Endothelial cell of umbilical vein (primary cell): ENCODE measurements at regions of chr16 and their contacts with region 1.

Region 1: GRCh38 chr16:88824256-88825082 is 12.7 kb upstream of the APRT start:
- DNase-seq: no peak
- H3K4me3 ChIP-seq: no peak overlapping the region
- H3K27ac ChIP-seq: no peak overlapping the region
- H3K4me1 ChIP-seq: no peaks in the 10 kb centered on the region
- H3K27me3 ChIP-seq: no peaks in the 10 kb centered on the region
- CTCF ChIP-seq: no peak
- POLR2A ChIP-seq: no peak

Region 2: DNA sequence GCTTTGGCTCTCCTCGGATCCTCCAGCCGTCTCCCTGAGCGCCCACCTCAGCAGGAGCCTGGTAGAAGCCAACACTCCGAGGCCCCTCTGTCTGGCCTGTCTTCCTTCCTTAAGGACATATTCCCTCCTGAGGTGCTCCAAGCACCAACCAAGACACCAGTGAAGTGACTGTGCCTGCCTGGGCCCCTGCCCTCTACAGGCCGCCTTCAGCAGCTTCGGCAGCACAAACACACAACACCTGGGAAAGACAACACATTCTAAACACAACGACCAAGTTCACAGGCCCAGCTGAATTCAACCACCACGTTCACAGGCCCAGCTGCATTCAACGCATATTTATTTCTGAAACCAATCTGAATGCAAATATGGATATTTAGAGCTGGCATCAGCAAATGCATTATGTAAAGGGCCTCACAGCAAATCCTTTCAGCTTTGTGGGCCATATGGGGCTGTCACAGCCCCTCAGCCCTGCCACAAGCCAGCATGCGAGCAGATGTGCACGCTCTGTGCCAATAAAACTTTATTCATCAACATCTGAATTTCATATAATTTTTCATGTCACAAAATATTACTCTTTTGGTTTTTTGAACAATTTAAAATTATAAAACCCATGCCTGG is 20.1 kb after region 1 on chr16:
- CTCF ChIA-PET with region 1: interaction called, 4 read pairs
- POLR2A ChIA-PET with region 1: no interaction called
- dilution Hi-C with region 1: no loop called
- intact Hi-C with region 1: loop called (anchors 2 kb)
- DNase-seq: no peak
- H3K4me3 ChIP-seq: no peak overlapping the region
- H3K27ac ChIP-seq: no peak overlapping the region
- H3K4me1 ChIP-seq: no peaks in the 10 kb centered on the region
- H3K27me3 ChIP-seq: no peaks in the 10 kb centered on the region
- CTCF ChIP-seq: no peak
- POLR2A ChIP-seq: no peak